ENCODE measurements at regions of chr4 and their contacts with region 1.

Region 1: GRCh38 chr4:142126890-142127497 is 490.6 kb downstream of the IL15 start:
- DNase-seq: peak; percentile 11 to 29
- ATAC-seq: peak; percentile 59 to 68
- H3K4me3 ChIP-seq: no peak overlapping the region
- H3K27ac ChIP-seq: no peak overlapping the region
- H3K4me1 ChIP-seq: no peaks in the 10 kb centered on the region
- H3K27me3 ChIP-seq: no peaks in the 10 kb centered on the region
- CTCF ChIP-seq: peak; percentile 54 to 88 (median 71)
- POLR2A ChIP-seq: no peak

Region 2: GRCh38 chr4:142065086-142065647 is 61.8 kb before region 1 on chr4:
- in situ Hi-C with region 1: no loop called
- intact Hi-C with region 1: loop called (anchors 2 kb)
- DNase-seq: no peak
- ATAC-seq: no peak
- H3K4me3 ChIP-seq: no peak overlapping the region
- H3K27ac ChIP-seq: no peak overlapping the region
- H3K4me1 ChIP-seq: no peaks in the 10 kb centered on the region
- H3K27me3 ChIP-seq: no peaks in the 10 kb centered on the region
- CTCF ChIP-seq: no peak
- POLR2A ChIP-seq: no peak

Region 3: GRCh38 chr4:142567199-142567598 is 440.2 kb after region 1 on chr4:
- in situ Hi-C with region 1: no loop called
- intact Hi-C with region 1: loop called (anchors 10 kb)
- DNase-seq: no peak
- ATAC-seq: no peak
- H3K4me3 ChIP-seq: no peak overlapping the region
- H3K27ac ChIP-seq: no peak overlapping the region
- H3K4me1 ChIP-seq: no peaks in the 10 kb centered on the region
- H3K27me3 ChIP-seq: no peaks in the 10 kb centered on the region
- CTCF ChIP-seq: no peak
- POLR2A ChIP-seq: no peak

Region 4: GRCh38 chr4:142719854-142720541 is 593.0 kb after region 1 on chr4:
- in situ Hi-C with region 1: loop called in 1 of 4 experiments (anchors 25 kb)
- intact Hi-C with region 1: loop called (anchors 10 kb)
- DNase-seq: no peak
- ATAC-seq: no peak
- H3K4me3 ChIP-seq: no peak overlapping the region
- H3K27ac ChIP-seq: no peak overlapping the region
- H3K4me1 ChIP-seq: no peaks in the 10 kb centered on the region
- H3K27me3 ChIP-seq: no peaks in the 10 kb centered on the region
- CTCF ChIP-seq: peak in 3 of 5 experiments; percentile 30 to 51 (median 36)
- POLR2A ChIP-seq: no peak